Activated naive CD4-positive, alpha-beta T cell treated with anti-CD3 and anti-CD28 coated beads for 36 hours (primary cell): ENCODE measurements at regions of chr6 and their contacts with region 1.

Region 1: GRCh38 chr6:45421709-45422502 is 44.2 kb upstream of the SUPT3H start:
- DNase-seq: peak; percentile 62
- H3K4me3 Mint-ChIP-seq: peak overlapping the region; percentile 93
- H3K27ac Mint-ChIP-seq: peak overlapping the region; percentile 88
- H3K4me1 Mint-ChIP-seq: peaks cover 29% of the 10 kb centered on the region
- H3K27me3 Mint-ChIP-seq: peaks cover 13% of the 10 kb centered on the region

Region 2: GRCh38 chr6:44630125-44631028 is 791.5 kb before region 1 on chr6:
- CTCF ChIA-PET with region 1: interaction called, 6 read pairs
- intact Hi-C with region 1: loop called (anchors 1 kb)
- DNase-seq: peak; percentile 50
- H3K4me3 Mint-ChIP-seq: no peak overlapping the region
- H3K27ac Mint-ChIP-seq: no peak overlapping the region
- H3K4me1 Mint-ChIP-seq: peaks cover 13% of the 10 kb centered on the region
- H3K27me3 Mint-ChIP-seq: no peaks in the 10 kb centered on the region

Region 3: GRCh38 chr6:44855562-44856411 is 566.1 kb before region 1 on chr6:
- CTCF ChIA-PET with region 1: no interaction called
- intact Hi-C with region 1: loop called (anchors 5 kb)
- DNase-seq: no peak
- H3K4me3 Mint-ChIP-seq: no peak overlapping the region
- H3K27ac Mint-ChIP-seq: no peak overlapping the region
- H3K4me1 Mint-ChIP-seq: peaks cover 39% of the 10 kb centered on the region
- H3K27me3 Mint-ChIP-seq: no peaks in the 10 kb centered on the region

Region 4: DNA sequence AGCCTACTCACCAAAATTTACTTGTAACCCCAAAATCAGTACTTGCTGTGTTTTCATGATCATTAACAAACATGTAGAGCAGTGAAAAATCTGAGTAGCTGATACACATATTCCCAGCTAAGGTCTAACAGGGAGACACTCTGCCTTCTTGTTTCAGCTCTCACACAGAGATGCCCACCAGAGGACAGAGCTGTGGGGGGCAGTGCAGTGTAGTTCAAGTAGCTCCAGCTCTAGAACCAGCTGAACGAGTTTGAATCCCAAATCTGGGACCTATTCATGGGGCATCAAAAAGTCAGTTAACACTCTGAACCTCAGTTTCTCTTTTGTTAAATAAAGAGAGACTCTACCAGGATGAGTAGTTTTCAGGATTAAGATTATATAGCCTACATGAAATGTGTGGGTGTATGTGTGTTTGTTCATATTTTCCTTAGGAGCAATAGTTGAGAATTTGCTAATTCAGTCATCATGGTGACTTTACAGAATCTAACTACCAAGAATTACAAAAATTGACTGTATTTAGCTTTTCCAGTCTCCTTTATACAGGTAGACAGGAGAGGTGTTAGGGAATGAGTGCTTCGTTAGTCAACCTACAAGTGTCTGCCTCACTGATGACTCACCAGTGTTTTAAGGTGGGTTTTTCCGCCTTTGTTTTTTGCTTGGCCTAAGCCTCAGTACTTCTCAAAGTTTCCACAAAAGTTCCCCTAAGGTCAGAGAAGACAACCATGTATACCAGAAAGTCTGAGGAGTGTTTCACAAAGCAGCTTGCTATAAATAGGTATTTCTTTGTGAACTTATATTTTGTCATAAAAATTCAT is 257.7 kb before region 1 on chr6:
- CTCF ChIA-PET with region 1: no interaction called
- intact Hi-C with region 1: loop called (anchors 2 kb)
- DNase-seq: peak; percentile 72
- H3K4me3 Mint-ChIP-seq: peak overlapping the region; percentile 17
- H3K27ac Mint-ChIP-seq: peak overlapping the region; percentile 93
- H3K4me1 Mint-ChIP-seq: peaks cover 63% of the 10 kb centered on the region
- H3K27me3 Mint-ChIP-seq: no peaks in the 10 kb centered on the region

Region 5: DNA sequence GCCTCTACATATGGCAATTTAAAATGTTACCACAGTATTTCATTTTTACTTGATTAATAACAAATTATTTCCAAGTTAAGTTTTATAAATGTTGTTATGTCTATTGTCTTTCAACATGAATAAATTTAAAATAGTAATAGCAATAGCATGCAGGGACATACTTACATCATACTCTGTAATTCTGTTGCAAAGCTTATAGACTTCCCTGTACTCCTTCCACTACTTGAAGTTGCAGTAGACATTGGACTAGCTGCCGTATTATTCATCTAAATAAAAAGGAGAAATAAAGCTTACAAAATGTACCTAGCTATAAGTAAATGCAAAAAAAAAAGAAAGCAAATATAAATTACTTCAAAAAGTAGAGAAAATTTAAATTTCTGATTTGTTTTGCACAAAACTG is 56.9 kb before region 1 on chr6:
- CTCF ChIA-PET with region 1: no interaction called
- intact Hi-C with region 1: no loop called
- DNase-seq: no peak
- H3K4me3 Mint-ChIP-seq: no peak overlapping the region
- H3K27ac Mint-ChIP-seq: no peak overlapping the region
- H3K4me1 Mint-ChIP-seq: peaks cover 13% of the 10 kb centered on the region
- H3K27me3 Mint-ChIP-seq: no peaks in the 10 kb centered on the region

Region 6: GRCh38 chr6:45436544-45437438 is 14.9 kb after region 1 on chr6:
- CTCF ChIA-PET with region 1: interaction called, 6 read pairs
- intact Hi-C with region 1: loop called (anchors 1 kb)
- DNase-seq: peak; percentile 77
- H3K4me3 Mint-ChIP-seq: peak overlapping the region; percentile 35
- H3K27ac Mint-ChIP-seq: peak overlapping the region; percentile 76
- H3K4me1 Mint-ChIP-seq: peaks cover 58% of the 10 kb centered on the region
- H3K27me3 Mint-ChIP-seq: no peaks in the 10 kb centered on the region

Region 7: DNA sequence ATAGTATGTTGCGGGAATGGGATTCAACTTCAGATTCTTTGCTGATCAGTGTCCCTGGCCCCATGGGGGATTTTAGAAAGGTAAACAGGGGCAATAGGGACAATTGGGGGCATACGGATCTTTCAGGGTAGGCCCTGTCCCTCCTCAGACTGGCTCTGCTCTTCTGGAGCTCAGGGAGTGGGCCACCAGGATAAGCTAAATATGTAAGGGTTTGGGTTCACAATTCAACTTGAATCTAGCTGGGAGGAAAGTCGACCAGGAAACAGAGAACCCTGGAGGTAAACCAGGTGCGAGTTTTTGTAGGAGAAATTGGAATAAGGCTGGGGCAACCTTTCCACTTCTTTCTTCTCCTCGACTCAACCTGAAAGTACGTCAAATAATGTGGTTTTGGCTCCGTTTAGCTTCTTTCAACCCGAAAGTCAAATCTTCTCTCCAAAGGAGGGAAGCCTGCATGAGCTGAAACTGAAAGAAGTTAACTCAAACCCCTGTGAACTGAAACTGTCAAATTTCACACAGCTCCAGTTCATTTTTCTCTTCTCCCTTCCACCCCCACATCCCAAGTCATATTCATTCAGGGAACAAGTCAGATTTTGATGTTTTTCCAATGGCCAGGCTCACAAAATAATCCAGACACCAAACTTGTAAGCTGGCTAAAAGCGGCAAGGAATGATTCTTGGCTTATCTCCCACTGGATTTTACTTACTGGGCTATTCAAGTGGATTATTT is 315.6 kb after region 1 on chr6:
- CTCF ChIA-PET with region 1: no interaction called
- intact Hi-C with region 1: loop called (anchors 1 kb)
- DNase-seq: peak; percentile 38
- H3K4me3 Mint-ChIP-seq: no peak overlapping the region
- H3K27ac Mint-ChIP-seq: peak overlapping the region; percentile 9
- H3K4me1 Mint-ChIP-seq: peaks cover 32% of the 10 kb centered on the region
- H3K27me3 Mint-ChIP-seq: peaks cover 29% of the 10 kb centered on the region